Posterior vena cava (tissue), 2 donors: ENCODE measurements at regions of chr2 and their contacts with region 1.

Region 1: DNA sequence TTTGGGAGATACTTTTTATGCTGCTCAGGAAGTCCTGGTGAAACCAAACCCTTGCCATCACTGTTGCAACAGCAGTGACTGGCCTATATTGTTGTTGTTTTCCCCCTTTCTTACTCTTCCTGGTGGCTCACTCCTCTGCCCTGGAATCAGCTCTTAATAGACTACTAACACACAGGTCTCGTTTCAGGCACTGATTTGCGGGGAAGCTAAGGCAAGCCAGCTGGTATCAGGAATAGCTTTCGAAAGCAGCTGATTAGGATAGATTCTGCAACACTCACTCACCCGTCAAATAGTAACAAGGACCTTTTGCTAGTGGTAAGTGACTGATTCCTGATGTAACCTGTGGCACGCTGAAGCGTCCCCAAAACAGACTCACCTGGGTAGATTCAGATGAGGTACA is 360.4 kb downstream of the PLCL1 start:
- DNase-seq: no peak

Region 2: GRCh38 chr2:198219292-198219691 is 54.4 kb after region 1 on chr2:
- intact Hi-C with region 1: loop called in 1 of 2 experiments (anchors 2 kb)
- DNase-seq: no peak